GM13976 (cell line): ENCODE measurements at regions of chr18 and their contacts with region 1.

Region 1: DNA sequence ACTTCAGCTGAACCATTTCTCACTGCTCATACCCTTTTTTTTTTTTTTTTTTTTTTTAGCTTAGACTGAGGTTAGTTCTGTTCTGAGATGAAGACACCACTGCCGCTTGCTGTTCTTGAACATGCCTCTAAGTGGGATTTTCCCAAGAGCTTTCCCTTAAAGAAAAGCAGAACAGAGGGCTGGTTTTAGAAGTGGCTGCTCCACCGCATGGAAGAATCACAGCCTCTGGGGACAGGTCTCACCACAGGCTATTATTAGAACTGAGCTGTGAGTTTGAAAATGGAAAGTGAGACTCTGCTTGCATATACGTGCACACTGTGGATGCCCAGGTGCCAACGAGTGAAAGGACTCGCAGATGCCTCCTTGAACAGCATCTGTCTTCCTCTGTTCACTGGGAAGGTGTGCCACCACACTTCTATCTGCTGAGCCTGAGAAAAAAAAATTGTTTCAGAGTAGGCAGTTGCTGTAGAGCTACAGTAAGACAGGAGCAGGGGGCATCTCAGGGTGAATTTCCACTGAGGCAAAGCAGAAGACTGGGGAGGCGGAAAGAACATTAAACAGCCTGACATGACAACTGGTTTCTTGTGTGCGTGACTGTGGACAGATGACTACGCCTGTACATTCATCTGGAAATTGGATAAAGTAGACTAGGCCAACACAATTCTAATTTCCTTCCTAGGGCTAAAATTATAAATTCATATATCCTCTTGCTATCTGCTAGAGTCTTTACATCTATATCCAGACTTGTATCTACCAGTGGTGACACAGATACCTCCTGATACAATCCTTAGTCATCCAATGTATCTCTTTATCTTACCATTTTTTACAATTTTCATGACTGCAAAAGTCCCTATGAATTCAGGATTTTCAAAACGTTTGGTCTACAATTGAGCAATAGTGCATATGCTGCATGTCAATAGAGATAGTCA is 1045.7 kb upstream of the CELF4 start:
- DNase-seq: peak; percentile 4
- CTCF ChIP-seq: no peak

Region 2: DNA sequence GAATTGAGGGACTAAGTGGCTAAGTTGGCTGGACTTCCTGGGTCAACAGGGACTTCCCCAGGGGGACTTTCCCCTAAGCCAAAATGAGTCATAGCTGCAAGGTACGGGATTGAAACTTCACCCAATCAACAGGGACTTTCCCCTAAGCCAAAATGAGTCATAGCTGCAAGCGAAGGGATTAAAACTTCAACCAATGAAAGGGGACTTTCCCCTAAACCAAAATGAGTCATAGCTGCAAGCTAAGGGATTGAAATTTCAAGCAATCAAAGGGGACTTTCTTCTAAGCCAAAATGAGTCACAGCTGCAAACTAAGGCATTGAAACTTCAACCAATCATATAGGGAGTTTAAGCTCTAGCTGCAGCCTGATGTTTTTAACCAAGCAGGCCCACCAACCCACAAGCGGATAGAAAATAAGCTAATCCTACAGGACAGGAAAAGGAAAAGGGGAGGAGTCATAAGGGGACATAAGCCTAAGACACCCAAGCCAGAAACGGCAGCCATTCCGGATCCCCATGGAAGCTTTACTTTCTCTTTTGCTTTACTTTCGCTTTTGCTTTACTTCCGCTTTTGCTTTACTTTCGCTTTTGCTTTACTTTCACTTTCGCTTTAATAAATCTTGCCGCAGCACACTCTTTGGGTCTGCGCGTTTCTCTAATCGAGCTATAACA is 329.7 kb after region 1 on chr18:
- in situ Hi-C with region 1: loop called (anchors 10 kb)
- DNase-seq: peak; percentile 53
- CTCF ChIP-seq: no peak